Ascending aorta (tissue), 2 donors: ENCODE measurements at regions of chr11 and their contacts with region 1.

Region 1: DNA sequence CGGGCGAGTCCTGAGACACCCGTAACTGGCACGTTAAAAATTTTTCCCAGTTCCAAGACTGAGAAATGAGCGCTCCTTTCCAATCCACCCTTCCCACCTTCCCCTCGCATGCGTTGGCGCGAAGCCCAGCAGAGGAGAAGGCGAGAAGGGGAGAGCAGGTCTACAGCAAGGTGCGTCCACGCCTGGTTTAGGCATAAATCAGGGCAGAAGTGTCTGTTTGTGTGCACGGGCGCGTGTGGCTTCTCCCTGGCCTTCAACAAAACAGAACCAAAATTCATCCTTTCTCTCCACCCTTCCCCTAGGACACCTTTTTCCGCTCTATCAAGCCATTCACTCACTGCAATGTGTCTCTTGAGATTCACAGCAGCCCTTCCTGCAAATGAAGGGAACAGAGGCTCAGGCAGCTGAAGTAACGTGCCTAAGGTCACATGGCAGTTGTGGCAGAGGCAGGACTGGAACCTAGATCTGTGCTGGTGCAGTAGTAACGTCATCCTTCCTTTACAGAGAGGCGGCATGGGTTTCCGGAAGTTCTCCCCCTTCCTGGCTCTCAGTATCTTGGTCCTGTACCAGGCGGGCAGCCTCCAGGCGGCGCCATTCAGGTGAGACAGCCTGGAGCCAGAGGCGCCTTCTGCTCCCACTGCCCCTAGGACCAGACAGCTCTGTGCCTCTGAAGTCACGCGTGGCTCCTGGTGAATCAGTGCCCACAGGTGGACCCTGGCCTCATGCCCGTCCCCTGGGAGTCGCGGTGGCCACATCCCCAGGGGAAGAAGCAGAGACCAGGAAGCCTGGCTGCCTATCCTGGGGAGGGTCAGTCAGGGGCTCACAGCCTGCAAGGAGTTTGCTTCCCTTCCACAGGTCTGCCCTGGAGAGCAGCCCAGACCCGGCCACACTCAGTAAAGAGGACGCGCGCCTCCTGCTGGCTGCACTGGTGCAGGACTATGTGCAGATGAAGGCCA is 1.1 kb downstream of the CALCB start:
- DNase-seq: peak; percentile 43 to 87
- H3K4me3 ChIP-seq: peak overlapping the region; percentile 52 to 62
- H3K27ac ChIP-seq: no peak overlapping the region
- H3K4me1 ChIP-seq: peaks cover 0 to 18% of the 10 kb centered on the region in 2 donors
- H3K27me3 ChIP-seq: no peaks in the 10 kb centered on the region
- CTCF ChIP-seq: peak; percentile 43 to 76 (median 67)

Region 2: GRCh38 chr11:14554959-14555358 is 519.5 kb before region 1 on chr11:
- intact Hi-C with region 1: loop called (anchors 10 kb)
- DNase-seq: no peak
- H3K4me3 ChIP-seq: no peak overlapping the region
- H3K27ac ChIP-seq: no peak overlapping the region
- H3K4me1 ChIP-seq: no peaks in the 10 kb centered on the region
- H3K27me3 ChIP-seq: no peaks in the 10 kb centered on the region
- CTCF ChIP-seq: no peak

Region 3: GRCh38 chr11:14789879-14790484 is 284.5 kb before region 1 on chr11:
- intact Hi-C with region 1: loop called (anchors 10 kb)
- DNase-seq: no peak
- H3K4me3 ChIP-seq: no peak overlapping the region
- H3K27ac ChIP-seq: no peak overlapping the region
- H3K4me1 ChIP-seq: no peaks in the 10 kb centered on the region
- H3K27me3 ChIP-seq: no peaks in the 10 kb centered on the region
- CTCF ChIP-seq: peak in 2 of 3 experiments; percentile 33 to 45

Region 4: DNA sequence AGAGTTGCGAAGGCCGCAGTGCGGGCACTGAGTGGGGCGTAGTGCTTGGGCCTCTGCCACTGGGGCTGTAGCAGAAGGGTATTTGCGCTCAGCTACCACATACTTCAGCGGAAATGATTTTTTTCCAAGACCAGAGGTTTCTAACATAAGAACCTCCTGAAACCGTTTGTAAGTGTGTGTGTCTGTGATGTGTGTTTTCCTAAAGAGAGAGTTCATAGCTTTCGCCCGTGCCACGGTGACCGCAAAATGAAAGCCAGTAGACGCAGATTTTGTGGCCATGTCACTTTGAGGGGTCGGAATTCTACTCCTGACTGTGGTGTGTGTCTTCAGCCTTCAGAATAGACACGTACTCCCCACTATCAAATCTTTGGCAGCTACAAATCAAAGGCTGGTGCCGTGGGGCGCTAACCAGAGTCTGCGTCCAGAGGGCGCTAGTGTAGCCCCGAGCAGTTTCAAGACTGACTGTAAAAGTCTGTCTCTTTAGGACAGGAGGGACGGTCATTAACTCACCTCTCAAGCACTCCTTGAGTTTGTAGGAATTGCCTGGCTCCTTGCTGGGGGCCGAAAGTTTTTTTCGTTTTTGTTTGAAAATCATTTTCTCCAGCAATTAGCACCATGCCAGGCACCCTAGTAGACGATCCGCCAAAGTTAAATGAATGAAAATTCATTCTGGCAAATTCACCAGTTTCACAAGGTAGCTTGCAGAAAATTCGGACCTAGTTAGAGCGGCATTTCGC is 99.8 kb before region 1 on chr11:
- intact Hi-C with region 1: loop called (anchors 2 kb)
- DNase-seq: no peak
- H3K4me3 ChIP-seq: peak overlapping the region; percentile 43 to 51
- H3K27ac ChIP-seq: no peak overlapping the region
- H3K4me1 ChIP-seq: peaks cover 0 to 19% of the 10 kb centered on the region in 2 donors
- H3K27me3 ChIP-seq: peaks cover 10% of the 10 kb centered on the region
- CTCF ChIP-seq: peak in 2 of 3 experiments; percentile 46 to 59

Region 5: DNA sequence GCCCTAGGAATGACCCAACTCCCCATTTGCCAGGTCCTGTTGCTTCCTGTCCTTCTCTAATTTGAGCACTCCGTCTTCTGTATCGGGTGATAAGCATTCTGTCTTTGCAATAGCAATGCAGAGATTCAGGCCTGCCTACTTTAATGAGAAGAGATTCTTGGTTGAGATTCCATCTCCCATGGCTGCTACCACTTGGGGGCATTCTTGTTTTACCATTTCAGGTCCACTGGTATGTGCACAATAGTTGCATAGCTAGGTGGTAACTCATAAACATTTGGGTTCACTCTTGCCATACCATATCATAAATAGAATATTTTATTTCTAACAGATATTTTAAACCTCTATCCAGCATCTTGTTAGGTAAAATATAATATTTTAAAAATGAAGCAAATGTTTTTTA is 35.5 kb before region 1 on chr11:
- intact Hi-C with region 1: no loop called
- DNase-seq: no peak
- H3K4me3 ChIP-seq: no peak overlapping the region
- H3K27ac ChIP-seq: no peak overlapping the region
- H3K4me1 ChIP-seq: no peaks in the 10 kb centered on the region
- H3K27me3 ChIP-seq: no peaks in the 10 kb centered on the region
- CTCF ChIP-seq: no peak